ENCODE measurements at regions of chr6 and their contacts with region 1.

Region 1: GRCh38 chr6:43516697-43517504 is at the starts of genes POLR1C and YIPF3:
- DNase-seq: peak; percentile 83 to 97 (median 96)
- ATAC-seq: peak; percentile 95
- H3K4me3 ChIP-seq: peak within 1 kb of the TSS; percentile 100
- H3K4me3 Mint-ChIP-seq: no peak within 1 kb of the TSS
- H3K27ac ChIP-seq: peak within 1 kb of the TSS; percentile 96
- H3K27ac Mint-ChIP-seq: no peak within 1 kb of the TSS
- H3K4me1 ChIP-seq: peaks cover 32 to 36% of the 10 kb centered on the region in 2 donors
- H3K4me1 Mint-ChIP-seq: peaks cover 8 to 36% (median 31%) of the 10 kb centered on the region in 7 donors
- H3K27me3 ChIP-seq: no peaks in the 10 kb centered on the region
- H3K27me3 Mint-ChIP-seq: no peaks in the 10 kb centered on the region
- total RNA-seq, gene POLR1C: 36.3 to 61.1 (median 40.9) TPM
- total RNA-seq, gene YIPF3: 54.4 to 75.9 (median 67.3) TPM

Region 2: GRCh38 chr6:42050266-42051032 is 1466.5 kb before region 1 on chr6 and contains the start of gene TAF8:
- CTCF ChIA-PET with region 1: no interaction called
- POLR2A ChIA-PET with region 1: no interaction called
- intact Hi-C with region 1: loop called in 1 of 2 experiments (anchors 2 kb)
- DNase-seq: peak; percentile 76 to 89 (median 87)
- ATAC-seq: peak; percentile 80
- H3K4me3 ChIP-seq: peak within 1 kb of the TSS; percentile 98
- H3K4me3 Mint-ChIP-seq: peak within 1 kb of the TSS; percentile 89 to 99 (median 99)
- H3K27ac ChIP-seq: peak within 1 kb of the TSS; percentile 78
- H3K27ac Mint-ChIP-seq: peak within 1 kb of the TSS; percentile 93 to 98 (median 97)
- H3K4me1 ChIP-seq: peaks cover 24 to 27% of the 10 kb centered on the region in 2 donors
- H3K4me1 Mint-ChIP-seq: peaks cover 36 to 70% (median 51%) of the 10 kb centered on the region in 7 donors
- H3K27me3 ChIP-seq: no peaks in the 10 kb centered on the region
- H3K27me3 Mint-ChIP-seq: no peaks in the 10 kb centered on the region
- total RNA-seq, gene TAF8: 41.6 to 58.2 (median 50.8) TPM

Region 3: GRCh38 chr6:43059168-43060033 is 457.5 kb before region 1 on chr6 and contains the starts of genes KLC4 and MRPL2:
- CTCF ChIA-PET with region 1: no interaction called
- POLR2A ChIA-PET with region 1: interaction called, 3 read pairs
- intact Hi-C with region 1: loop called in 1 of 2 experiments (anchors 10 kb)
- DNase-seq: peak; percentile 79 to 98 (median 95)
- ATAC-seq: peak; percentile 99
- H3K4me3 ChIP-seq: peak within 1 kb of the TSS; percentile 80
- H3K4me3 Mint-ChIP-seq: peak within 1 kb of the TSS; percentile 88 to 100 (median 96)
- H3K27ac ChIP-seq: peak within 1 kb of the TSS; percentile 88
- H3K27ac Mint-ChIP-seq: peak within 1 kb of the TSS; percentile 95 to 100 (median 99)
- H3K4me1 ChIP-seq: peaks cover 0 to 21% of the 10 kb centered on the region in 2 donors
- H3K4me1 Mint-ChIP-seq: peaks cover 28 to 50% (median 45%) of the 10 kb centered on the region in 7 donors
- H3K27me3 ChIP-seq: no peaks in the 10 kb centered on the region
- H3K27me3 Mint-ChIP-seq: no peaks in the 10 kb centered on the region
- total RNA-seq, gene KLC4: 16.5 to 56.9 (median 42.5) TPM
- total RNA-seq, gene MRPL2: 32.0 to 57.5 (median 47.7) TPM

Region 4: DNA sequence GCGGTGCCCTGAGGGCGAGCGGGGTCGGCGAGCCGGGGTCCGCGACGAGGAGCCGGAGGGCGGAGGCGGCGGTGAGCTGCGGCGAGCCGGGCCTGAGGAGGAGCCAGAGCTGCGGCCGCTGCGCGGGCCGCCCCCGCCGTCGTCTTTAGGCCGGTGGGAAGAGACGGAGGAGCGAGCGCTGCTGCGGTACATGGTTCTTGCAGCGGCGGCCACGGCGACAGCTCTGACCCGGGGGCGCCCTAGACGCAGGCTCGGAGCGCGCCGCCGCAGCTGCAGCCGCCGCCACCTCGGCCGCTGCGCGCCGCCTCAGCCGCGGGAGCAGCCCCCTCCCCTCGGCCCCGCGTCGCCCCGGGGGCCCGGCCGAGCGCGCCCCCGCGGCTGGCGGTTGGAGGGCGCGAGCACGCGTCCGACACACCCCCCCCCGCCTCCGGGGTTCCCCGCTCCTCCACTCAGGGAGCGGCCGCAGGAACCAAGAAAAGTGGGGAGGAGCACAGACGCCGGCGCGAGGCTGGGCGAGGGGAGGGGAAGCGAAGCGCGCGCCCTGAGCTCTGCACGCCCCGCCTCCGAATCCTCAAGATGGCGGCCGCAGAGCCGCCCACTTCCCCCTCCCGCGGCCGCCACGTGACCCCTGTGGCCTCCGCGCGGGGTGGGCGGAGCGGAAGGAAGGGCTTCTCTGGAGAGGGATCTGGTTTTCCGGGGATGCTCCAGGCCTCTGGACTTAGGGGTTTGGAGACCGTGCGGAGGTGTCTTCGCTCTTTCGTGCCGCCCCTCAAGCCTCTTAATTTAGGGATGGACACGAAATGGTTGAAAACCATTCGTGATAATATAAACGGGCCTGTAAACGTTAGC is 147.5 kb before region 1 on chr6 and contains the start of gene ZNF318:
- CTCF ChIA-PET with region 1: no interaction called
- POLR2A ChIA-PET with region 1: interaction called, 8 read pairs
- intact Hi-C with region 1: loop called in 1 of 2 experiments (anchors 1 kb)
- DNase-seq: peak; percentile 85 to 95 (median 93)
- ATAC-seq: peak; percentile 97
- H3K4me3 ChIP-seq: peak within 1 kb of the TSS; percentile 90
- H3K4me3 Mint-ChIP-seq: peak within 1 kb of the TSS; percentile 75 to 97 (median 92)
- H3K27ac ChIP-seq: peak within 1 kb of the TSS; percentile 87
- H3K27ac Mint-ChIP-seq: peak within 1 kb of the TSS; percentile 91 to 98 (median 95)
- H3K4me1 ChIP-seq: peaks cover 20 to 23% of the 10 kb centered on the region in 2 donors
- H3K4me1 Mint-ChIP-seq: peaks cover 28 to 56% (median 50%) of the 10 kb centered on the region in 7 donors
- H3K27me3 ChIP-seq: no peaks in the 10 kb centered on the region
- H3K27me3 Mint-ChIP-seq: peaks cover 0 to 17% (median 0%) of the 10 kb centered on the region in 5 donors
- total RNA-seq, gene ZNF318: 15.8 to 40.2 (median 28.3) TPM

Region 5: DNA sequence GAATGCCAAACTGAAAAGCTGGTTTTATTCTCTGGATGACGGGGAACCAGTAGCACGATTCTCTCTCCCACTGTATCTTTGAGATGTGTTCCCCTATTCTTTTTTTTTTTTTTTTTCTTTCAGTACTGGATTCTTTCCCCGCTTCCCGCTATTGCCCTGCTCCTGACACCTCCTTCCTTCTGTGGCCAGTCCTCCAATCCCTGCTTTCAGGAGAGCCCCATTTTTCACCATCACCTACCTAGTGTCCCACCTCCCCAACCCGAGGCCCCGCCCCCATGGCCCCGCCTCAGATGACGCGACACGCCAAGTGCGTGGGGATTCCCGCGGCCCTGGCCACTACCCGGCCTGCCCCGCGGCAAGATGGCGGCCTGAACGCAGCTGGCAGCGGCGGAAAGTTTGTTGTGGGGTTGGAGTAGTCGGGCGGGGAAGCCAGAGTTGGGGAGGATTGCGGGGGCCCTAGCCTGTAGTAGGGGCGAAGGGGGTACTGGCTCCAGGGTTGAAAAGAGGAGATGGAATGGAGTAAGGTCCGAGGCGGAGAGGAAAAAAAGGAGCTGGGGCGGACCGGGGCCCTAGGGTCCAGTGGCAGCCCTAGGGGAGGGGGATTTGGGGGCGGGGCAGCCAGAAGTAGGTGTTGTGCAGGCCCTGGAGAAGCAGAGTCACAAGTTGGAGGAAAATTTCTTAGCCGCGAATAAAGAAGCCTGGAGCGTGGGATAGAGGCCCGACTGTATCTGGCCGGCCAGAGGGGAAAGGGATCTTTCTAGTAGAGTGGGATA is 39.5 kb before region 1 on chr6 and contains the start of gene TJAP1:
- CTCF ChIA-PET with region 1: no interaction called
- POLR2A ChIA-PET with region 1: interaction called, 5 read pairs
- intact Hi-C with region 1: loop called (anchors 1 to 2 kb)
- DNase-seq: peak; percentile 89 to 99 (median 95)
- ATAC-seq: peak; percentile 100
- H3K4me3 ChIP-seq: peak within 1 kb of the TSS; percentile 83
- H3K4me3 Mint-ChIP-seq: peak within 1 kb of the TSS; percentile 87 to 99 (median 93)
- H3K27ac ChIP-seq: peak within 1 kb of the TSS; percentile 96
- H3K27ac Mint-ChIP-seq: peak within 1 kb of the TSS; percentile 90 to 98 (median 96)
- H3K4me1 ChIP-seq: peaks cover 10 to 16% of the 10 kb centered on the region in 2 donors
- H3K4me1 Mint-ChIP-seq: peaks cover 37 to 54% (median 51%) of the 10 kb centered on the region in 7 donors
- H3K27me3 ChIP-seq: no peaks in the 10 kb centered on the region
- H3K27me3 Mint-ChIP-seq: no peaks in the 10 kb centered on the region
- total RNA-seq, gene TJAP1: 29.2 to 55.2 (median 33.5) TPM

Region 6: GRCh38 chr6:43532201-43532600 is 15.3 kb after region 1 on chr6:
- CTCF ChIA-PET with region 1: no interaction called
- POLR2A ChIA-PET with region 1: interaction called, 16 read pairs
- intact Hi-C with region 1: no loop called
- DNase-seq: no peak
- ATAC-seq: no peak
- H3K4me3 ChIP-seq: no peak overlapping the region
- H3K4me3 Mint-ChIP-seq: no peak overlapping the region
- H3K27ac ChIP-seq: no peak overlapping the region
- H3K27ac Mint-ChIP-seq: no peak overlapping the region
- H3K4me1 ChIP-seq: no peaks in the 10 kb centered on the region
- H3K4me1 Mint-ChIP-seq: no peaks in the 10 kb centered on the region
- H3K27me3 ChIP-seq: no peaks in the 10 kb centered on the region
- H3K27me3 Mint-ChIP-seq: no peaks in the 10 kb centered on the region

Region 7: DNA sequence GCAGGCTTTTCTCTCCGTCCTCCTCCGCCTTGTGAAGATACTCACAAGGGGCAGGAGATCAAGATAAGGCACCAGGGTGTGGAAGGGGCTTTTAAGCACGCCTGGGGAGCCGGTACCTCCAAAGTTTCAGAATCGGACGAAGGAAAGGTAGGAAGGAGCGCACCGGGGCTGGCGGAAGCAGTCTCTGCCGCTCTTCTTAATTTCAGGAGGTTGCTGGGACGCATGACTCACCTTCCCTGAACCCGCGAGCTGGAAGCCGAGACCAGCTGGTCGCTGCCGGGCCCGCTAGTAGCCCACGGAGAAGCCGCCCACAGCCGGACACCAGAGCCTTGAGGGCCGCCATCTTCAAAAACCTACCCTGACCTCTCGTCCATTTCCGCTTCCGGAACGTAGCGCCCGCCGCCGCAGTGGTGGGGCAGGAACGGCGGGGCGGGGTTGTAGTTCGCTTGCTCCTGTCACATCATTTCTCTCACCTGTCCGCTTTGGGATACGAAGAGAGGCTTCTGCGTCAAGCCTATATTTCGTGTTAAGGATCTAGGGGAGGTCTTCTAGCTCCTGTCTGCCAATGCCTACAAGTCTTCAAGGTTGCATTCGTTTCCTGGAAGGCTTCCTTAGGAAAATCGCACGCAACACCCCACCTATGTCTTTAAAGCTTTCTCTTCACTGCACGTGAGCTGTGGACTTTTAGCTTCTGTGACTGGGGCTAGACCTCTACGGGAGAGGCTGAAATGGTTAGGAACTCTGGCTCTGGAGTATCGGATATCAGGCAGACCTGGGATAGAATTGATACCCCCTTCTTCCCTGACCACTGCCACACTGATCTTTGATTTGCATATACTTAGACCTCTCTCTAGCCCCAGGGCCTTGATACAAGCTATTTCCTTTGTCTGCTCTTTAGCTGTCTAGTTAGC is 170.8 kb after region 1 on chr6 and contains the start of gene MRPS18A:
- CTCF ChIA-PET with region 1: no interaction called
- POLR2A ChIA-PET with region 1: no interaction called
- intact Hi-C with region 1: loop called in 1 of 2 experiments (anchors 5 kb)
- DNase-seq: peak; percentile 53 to 82 (median 72)
- ATAC-seq: peak; percentile 97
- H3K4me3 ChIP-seq: peak within 1 kb of the TSS; percentile 98
- H3K4me3 Mint-ChIP-seq: peak within 1 kb of the TSS; percentile 94 to 99 (median 97)
- H3K27ac ChIP-seq: peak within 1 kb of the TSS; percentile 81
- H3K27ac Mint-ChIP-seq: peak within 1 kb of the TSS; percentile 87 to 96 (median 94)
- H3K4me1 ChIP-seq: peaks cover 10 to 22% of the 10 kb centered on the region in 2 donors
- H3K4me1 Mint-ChIP-seq: peaks cover 28 to 55% (median 52%) of the 10 kb centered on the region in 7 donors
- H3K27me3 ChIP-seq: no peaks in the 10 kb centered on the region
- H3K27me3 Mint-ChIP-seq: peaks cover 0 to 3% (median 0%) of the 10 kb centered on the region in 5 donors
- total RNA-seq, gene MRPS18A: 20.9 to 39.2 (median 28.7) TPM

Region 8: DNA sequence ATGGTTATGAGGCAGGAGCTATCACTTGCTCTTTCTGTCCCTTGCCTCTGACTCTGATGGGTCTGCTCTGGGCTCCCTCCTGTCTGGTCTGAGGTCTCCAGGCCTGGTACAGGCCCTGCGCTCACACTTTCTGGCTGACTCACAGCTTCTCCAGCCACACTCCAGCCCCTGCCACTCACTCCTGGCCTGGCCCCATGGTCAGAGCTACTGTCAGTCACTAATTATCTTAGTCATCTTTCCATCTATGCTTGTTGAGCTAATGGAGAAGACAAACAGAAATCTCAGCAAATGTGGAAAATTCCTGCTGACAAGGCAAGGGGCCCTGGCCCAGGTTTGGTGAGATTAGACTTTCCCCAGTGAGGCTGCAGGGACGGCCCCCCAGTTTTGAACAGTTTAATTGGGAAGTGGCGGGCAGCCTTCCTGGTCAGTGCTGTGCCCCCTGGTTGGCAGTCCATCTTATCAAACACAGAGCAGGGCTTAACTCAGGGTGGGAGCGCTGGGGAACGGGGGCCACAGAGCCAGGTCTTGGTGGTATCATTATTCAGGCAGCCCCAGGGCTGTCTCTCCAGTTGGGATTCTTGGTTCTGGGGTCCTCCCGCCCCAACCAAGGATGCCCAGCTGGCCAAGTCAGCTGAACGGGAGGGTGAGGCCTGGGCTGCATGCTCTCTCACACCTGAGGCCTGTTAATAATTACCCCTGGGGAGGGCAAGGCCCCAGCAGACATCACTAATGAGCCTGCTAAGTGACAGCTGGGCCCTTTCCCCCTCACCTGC is 316.5 kb after region 1 on chr6:
- CTCF ChIA-PET with region 1: no interaction called
- POLR2A ChIA-PET with region 1: no interaction called
- intact Hi-C with region 1: no loop called
- DNase-seq: no peak
- ATAC-seq: no peak
- H3K4me3 ChIP-seq: no peak overlapping the region
- H3K4me3 Mint-ChIP-seq: no peak overlapping the region
- H3K27ac ChIP-seq: no peak overlapping the region
- H3K27ac Mint-ChIP-seq: no peak overlapping the region
- H3K4me1 ChIP-seq: no peaks in the 10 kb centered on the region
- H3K4me1 Mint-ChIP-seq: no peaks in the 10 kb centered on the region
- H3K27me3 ChIP-seq: no peaks in the 10 kb centered on the region
- H3K27me3 Mint-ChIP-seq: peaks cover 0 to 15% (median 4%) of the 10 kb centered on the region in 5 donors

Region 9: GRCh38 chr6:44223319-44224028 is 706.6 kb after region 1 on chr6 and contains the start of gene SLC29A1:
- CTCF ChIA-PET with region 1: no interaction called
- POLR2A ChIA-PET with region 1: no interaction called
- intact Hi-C with region 1: no loop called
- DNase-seq: peak; percentile 65 to 82 (median 79)
- ATAC-seq: peak; percentile 90
- H3K4me3 ChIP-seq: peak within 1 kb of the TSS; percentile 63
- H3K4me3 Mint-ChIP-seq: peak within 1 kb of the TSS; percentile 75 to 93 (median 84)
- H3K27ac ChIP-seq: peak within 1 kb of the TSS; percentile 56
- H3K27ac Mint-ChIP-seq: peak within 1 kb of the TSS in 6 of 9 donors; percentile 6 to 84 (median 78)
- H3K4me1 ChIP-seq: peaks cover 15 to 16% of the 10 kb centered on the region in 2 donors
- H3K4me1 Mint-ChIP-seq: peaks cover 6 to 44% (median 29%) of the 10 kb centered on the region in 7 donors
- H3K27me3 ChIP-seq: no peaks in the 10 kb centered on the region
- H3K27me3 Mint-ChIP-seq: peaks cover 0 to 8% (median 0%) of the 10 kb centered on the region in 5 donors
- total RNA-seq, gene SLC29A1: 0.84 to 41.1 (median 1.8) TPM

Region 10: GRCh38 chr6:44542401-44543116 is 1025.7 kb after region 1 on chr6:
- CTCF ChIA-PET with region 1: no interaction called
- POLR2A ChIA-PET with region 1: no interaction called
- intact Hi-C with region 1: no loop called
- DNase-seq: no peak
- ATAC-seq: no peak
- H3K4me3 ChIP-seq: no peak overlapping the region
- H3K4me3 Mint-ChIP-seq: no peak overlapping the region
- H3K27ac ChIP-seq: no peak overlapping the region
- H3K27ac Mint-ChIP-seq: no peak overlapping the region
- H3K4me1 ChIP-seq: no peaks in the 10 kb centered on the region
- H3K4me1 Mint-ChIP-seq: no peaks in the 10 kb centered on the region
- H3K27me3 ChIP-seq: no peaks in the 10 kb centered on the region
- H3K27me3 Mint-ChIP-seq: peaks cover 0 to 10% (median 5%) of the 10 kb centered on the region in 5 donors